Activated CD4-positive, alpha-beta T cell treated with anti-CD3 and anti-CD28 coated beads for 36 hours (primary cell): ENCODE measurements at regions of chr3 and their contacts with region 1.

Region 1: DNA sequence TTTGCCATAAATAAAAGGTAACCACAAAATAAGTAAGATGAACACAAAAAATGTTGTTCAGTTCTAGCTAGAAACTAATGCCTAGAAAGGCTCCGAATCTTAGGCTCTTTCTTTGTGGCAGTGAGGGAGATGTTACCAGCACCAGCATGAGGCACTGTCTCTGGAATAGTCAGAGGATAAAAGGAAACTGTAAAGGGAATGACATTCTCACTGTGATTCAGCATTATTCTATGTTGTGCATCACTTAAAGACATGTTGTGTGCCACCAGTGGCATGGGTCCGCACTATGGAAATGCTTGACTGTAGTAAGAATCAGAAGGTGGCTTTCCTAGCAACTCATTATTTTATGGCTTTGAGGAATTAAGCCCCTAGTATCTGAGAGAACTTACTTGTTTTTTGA is 70.8 kb downstream of the SEC22A start:
- DNase-seq: no peak
- ATAC-seq: no peak
- H3K4me3 Mint-ChIP-seq: no peak overlapping the region
- H3K27ac Mint-ChIP-seq: no peak overlapping the region
- H3K4me1 Mint-ChIP-seq: no peaks in the 10 kb centered on the region
- H3K27me3 Mint-ChIP-seq: no peaks in the 10 kb centered on the region

Region 2: GRCh38 chr3:123081718-123082369 is 190.7 kb before region 1 on chr3:
- CTCF ChIA-PET with region 1: no interaction called
- POLR2A ChIA-PET with region 1: no interaction called
- intact Hi-C with region 1: no loop called
- DNase-seq: no peak
- ATAC-seq: no peak
- H3K4me3 Mint-ChIP-seq: no peak overlapping the region
- H3K27ac Mint-ChIP-seq: no peak overlapping the region
- H3K4me1 Mint-ChIP-seq: peaks cover 33% of the 10 kb centered on the region
- H3K27me3 Mint-ChIP-seq: no peaks in the 10 kb centered on the region

Region 3: GRCh38 chr3:123642182-123642956 is 369.8 kb after region 1 on chr3:
- CTCF ChIA-PET with region 1: no interaction called
- POLR2A ChIA-PET with region 1: no interaction called
- intact Hi-C with region 1: no loop called
- DNase-seq: peak; percentile 84
- ATAC-seq: peak; percentile 97
- H3K4me3 Mint-ChIP-seq: no peak overlapping the region
- H3K27ac Mint-ChIP-seq: no peak overlapping the region
- H3K4me1 Mint-ChIP-seq: no peaks in the 10 kb centered on the region
- H3K27me3 Mint-ChIP-seq: no peaks in the 10 kb centered on the region

Region 4: GRCh38 chr3:123870033-123870432 is 597.5 kb after region 1 on chr3:
- CTCF ChIA-PET with region 1: no interaction called
- POLR2A ChIA-PET with region 1: no interaction called
- intact Hi-C with region 1: loop called in 1 of 2 experiments (anchors 5 kb)
- DNase-seq: peak; percentile 10
- ATAC-seq: peak; percentile 76
- H3K4me3 Mint-ChIP-seq: no peak overlapping the region
- H3K27ac Mint-ChIP-seq: no peak overlapping the region
- H3K4me1 Mint-ChIP-seq: no peaks in the 10 kb centered on the region
- H3K27me3 Mint-ChIP-seq: peaks cover 14% of the 10 kb centered on the region